ENCODE measurements at regions of chr15 and their contacts with region 1.

Region 1: DNA sequence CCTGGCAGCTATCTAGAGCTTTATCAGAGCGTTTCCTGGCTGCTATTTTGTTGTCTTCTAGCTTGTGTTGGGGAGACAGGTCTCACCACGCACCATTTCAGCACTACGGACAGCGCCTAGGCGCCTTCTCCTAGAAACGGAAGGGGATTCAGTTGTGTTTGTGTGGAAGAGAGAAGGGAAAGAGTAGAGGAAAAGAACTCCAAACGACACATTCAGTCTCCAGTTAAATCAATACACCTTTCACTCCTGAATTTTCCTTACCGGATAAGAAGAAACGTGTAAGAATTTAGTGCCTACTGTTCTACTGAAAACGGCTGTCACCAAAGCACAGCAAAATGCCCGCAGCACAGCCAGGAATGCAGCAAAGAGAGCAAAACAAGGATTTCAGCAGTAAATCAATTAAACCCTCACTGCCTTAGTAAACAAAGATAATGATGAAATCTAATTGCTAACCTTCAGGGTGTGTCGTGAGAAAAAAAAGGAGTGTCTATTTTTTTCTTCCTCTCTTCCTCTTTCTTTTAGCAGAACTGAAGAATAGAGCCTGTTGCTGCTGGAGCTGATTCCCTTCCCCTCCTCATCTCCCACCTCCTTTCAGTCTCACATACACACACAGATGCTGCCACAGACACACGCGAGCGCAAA is 412 bp upstream of the CTXN2 start:
- DNase-seq: no peak
- ATAC-seq: no peak
- H3K4me3 Mint-ChIP-seq: no peak overlapping the region
- H3K27ac Mint-ChIP-seq: no peak overlapping the region
- H3K4me1 Mint-ChIP-seq: peaks cover 3% of the 10 kb centered on the region
- H3K27me3 Mint-ChIP-seq: peaks cover 19% of the 10 kb centered on the region
- CTCF ChIP-seq: no peak

Region 2: GRCh38 chr15:48006041-48006511 is 185.0 kb before region 1 on chr15:
- CTCF ChIA-PET with region 1: no interaction called
- POLR2A ChIA-PET with region 1: no interaction called
- intact Hi-C with region 1: no loop called
- DNase-seq: no peak
- ATAC-seq: no peak
- H3K4me3 Mint-ChIP-seq: no peak overlapping the region
- H3K27ac Mint-ChIP-seq: no peak overlapping the region
- H3K4me1 Mint-ChIP-seq: peaks cover 17% of the 10 kb centered on the region
- H3K27me3 Mint-ChIP-seq: peaks cover 2% of the 10 kb centered on the region
- CTCF ChIP-seq: no peak

Region 3: DNA sequence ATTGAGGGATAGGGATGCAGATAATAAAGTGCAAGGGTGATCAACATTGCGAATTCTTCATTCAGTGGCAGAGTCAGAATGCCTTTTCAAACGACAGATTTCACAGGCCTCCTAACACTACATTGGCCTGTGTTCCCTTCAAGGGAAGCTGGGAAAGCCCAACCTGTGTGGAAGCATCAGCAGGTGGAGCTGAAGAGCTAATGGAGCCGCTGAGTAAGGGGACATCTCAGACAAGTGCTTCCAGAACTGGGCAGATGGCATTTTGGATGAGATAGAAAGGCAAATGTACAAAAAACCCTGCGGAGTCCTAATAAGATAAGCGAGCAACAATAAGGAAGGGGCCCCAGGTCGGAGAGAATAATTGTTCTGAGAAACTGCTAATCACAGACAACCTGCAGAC is 78.8 kb before region 1 on chr15:
- CTCF ChIA-PET with region 1: no interaction called
- POLR2A ChIA-PET with region 1: no interaction called
- intact Hi-C with region 1: no loop called
- DNase-seq: no peak
- ATAC-seq: no peak
- H3K4me3 Mint-ChIP-seq: no peak overlapping the region
- H3K27ac Mint-ChIP-seq: no peak overlapping the region
- H3K4me1 Mint-ChIP-seq: no peaks in the 10 kb centered on the region
- H3K27me3 Mint-ChIP-seq: peaks cover 19% of the 10 kb centered on the region
- CTCF ChIP-seq: no peak

Region 4: DNA sequence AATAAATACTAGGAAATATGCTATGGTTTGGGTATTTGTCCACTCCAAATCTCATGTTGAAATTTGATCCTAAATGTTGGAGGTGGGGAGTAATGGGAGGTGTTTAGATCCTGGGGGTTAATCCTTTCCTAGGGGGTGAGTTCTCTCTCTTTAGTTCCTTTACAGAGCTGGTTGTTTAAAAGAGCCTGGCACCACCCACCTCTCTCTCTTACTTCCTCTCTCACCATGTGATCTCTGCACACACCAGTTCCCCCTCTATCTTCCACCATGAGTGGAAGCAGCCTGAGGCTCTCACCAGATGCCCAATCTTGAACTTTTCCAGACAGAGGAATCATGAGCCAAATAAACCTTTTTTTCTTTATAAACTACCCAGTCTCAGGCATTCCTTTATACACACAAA is 59.7 kb before region 1 on chr15:
- CTCF ChIA-PET with region 1: no interaction called
- POLR2A ChIA-PET with region 1: no interaction called
- intact Hi-C with region 1: loop called (anchors 10 kb)
- DNase-seq: no peak
- ATAC-seq: no peak
- H3K4me3 Mint-ChIP-seq: no peak overlapping the region
- H3K27ac Mint-ChIP-seq: no peak overlapping the region
- H3K4me1 Mint-ChIP-seq: no peaks in the 10 kb centered on the region
- H3K27me3 Mint-ChIP-seq: no peaks in the 10 kb centered on the region
- CTCF ChIP-seq: no peak

Region 5: GRCh38 chr15:48149858-48150257 is 41.2 kb before region 1 on chr15:
- CTCF ChIA-PET with region 1: no interaction called
- POLR2A ChIA-PET with region 1: no interaction called
- intact Hi-C with region 1: loop called (anchors 1 kb)
- DNase-seq: no peak
- ATAC-seq: no peak
- H3K4me3 Mint-ChIP-seq: no peak overlapping the region
- H3K27ac Mint-ChIP-seq: no peak overlapping the region
- H3K4me1 Mint-ChIP-seq: peaks cover 2% of the 10 kb centered on the region
- H3K27me3 Mint-ChIP-seq: no peaks in the 10 kb centered on the region
- CTCF ChIP-seq: no peak

Region 6: DNA sequence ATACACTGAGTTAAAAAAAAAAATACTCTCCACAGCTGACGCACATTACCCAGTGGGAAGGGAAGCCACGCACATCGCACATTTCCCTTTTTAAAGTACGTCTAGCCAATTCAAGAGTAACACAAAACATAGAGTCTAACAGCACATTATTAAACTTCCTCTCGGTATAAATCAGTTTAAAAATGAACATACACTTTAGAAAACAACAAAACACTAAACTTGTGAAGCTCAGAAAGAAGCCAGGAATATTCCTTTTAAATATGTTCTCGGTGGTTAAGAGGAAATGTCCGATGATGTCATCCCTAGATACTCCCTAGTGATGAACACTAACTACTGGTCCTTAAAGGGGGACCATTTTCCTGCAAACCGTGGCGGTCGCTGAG is 13.7 kb before region 1 on chr15:
- CTCF ChIA-PET with region 1: no interaction called
- POLR2A ChIA-PET with region 1: no interaction called
- intact Hi-C with region 1: no loop called
- DNase-seq: no peak
- ATAC-seq: peak; percentile 50
- H3K4me3 Mint-ChIP-seq: peak overlapping the region; percentile 94
- H3K27ac Mint-ChIP-seq: peak overlapping the region; percentile 90
- H3K4me1 Mint-ChIP-seq: peaks cover 18% of the 10 kb centered on the region
- H3K27me3 Mint-ChIP-seq: peaks cover 13% of the 10 kb centered on the region
- CTCF ChIP-seq: no peak

Region 7: DNA sequence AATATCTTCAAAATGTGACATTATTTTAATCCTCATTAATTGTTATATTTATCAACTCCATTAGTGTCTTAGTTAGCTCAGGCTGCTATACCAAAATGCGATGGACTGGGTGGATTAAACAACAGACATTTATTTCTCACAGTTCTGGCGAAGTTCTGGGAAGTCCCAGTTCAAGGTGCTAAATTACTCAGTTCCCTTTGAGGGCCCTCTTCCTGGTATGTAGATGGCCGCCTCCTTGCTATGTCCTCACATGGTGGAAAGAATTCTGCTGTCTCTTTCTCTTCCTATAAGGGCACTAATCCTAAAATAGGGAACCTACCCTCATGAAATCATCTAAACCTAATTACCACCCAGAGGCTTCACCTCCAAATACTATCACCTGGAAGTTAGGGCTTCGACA is 101.4 kb after region 1 on chr15:
- CTCF ChIA-PET with region 1: no interaction called
- POLR2A ChIA-PET with region 1: no interaction called
- intact Hi-C with region 1: no loop called
- DNase-seq: no peak
- ATAC-seq: no peak
- H3K4me3 Mint-ChIP-seq: no peak overlapping the region
- H3K27ac Mint-ChIP-seq: no peak overlapping the region
- H3K4me1 Mint-ChIP-seq: no peaks in the 10 kb centered on the region
- H3K27me3 Mint-ChIP-seq: peaks cover 5% of the 10 kb centered on the region
- CTCF ChIP-seq: no peak

Measured in activated B cell treated with CpG ODN at 0.5 μM for 24 hours (primary cell).